ENCODE measurements at regions of chr14 and their contacts with region 1.

Region 1: DNA sequence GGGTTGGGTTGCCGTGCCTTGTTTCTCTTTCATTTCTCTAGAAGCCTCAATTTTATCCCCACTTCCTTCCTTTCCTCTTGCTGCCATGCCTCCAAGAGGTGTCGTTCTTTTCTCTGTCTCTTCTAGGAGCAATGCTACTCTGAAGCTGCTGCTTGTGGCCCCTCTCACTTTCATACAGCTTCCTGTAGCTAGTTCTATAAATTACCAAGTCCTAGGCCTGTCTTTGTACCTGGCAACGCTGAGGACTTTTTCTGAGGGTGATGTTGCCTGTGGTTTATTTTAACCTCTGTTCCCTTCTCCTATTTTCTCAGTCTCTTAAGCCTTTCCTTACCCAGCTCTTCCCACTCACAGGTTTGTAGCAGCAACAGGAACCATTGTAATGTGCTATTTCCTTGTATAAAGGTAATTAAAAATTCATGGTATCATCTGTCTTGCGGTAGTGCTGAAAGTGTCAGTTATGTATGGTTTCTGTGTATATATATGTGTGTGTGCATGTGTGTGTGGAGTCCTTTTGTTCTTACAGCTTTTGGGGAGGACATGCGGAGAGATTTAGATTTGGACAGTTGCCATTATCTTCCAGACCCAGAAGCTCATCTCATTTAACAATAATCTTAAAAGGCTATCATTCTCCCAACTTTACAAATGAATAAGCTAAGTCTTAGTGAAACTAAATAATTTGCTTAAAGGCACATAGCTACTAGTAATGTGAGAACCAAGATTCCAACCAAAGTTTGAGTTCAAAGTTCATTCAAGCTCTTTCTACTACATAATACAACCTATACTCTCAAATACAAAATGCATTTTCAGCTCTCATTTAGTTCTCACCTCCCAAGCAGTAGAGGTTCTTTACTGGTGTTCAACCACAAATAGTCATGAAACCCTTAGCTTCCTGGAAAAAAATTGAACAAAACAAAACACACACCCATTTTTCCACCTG is 43.8 kb downstream of the DDHD1 start:
- DNase-seq: peak; percentile 82
- ATAC-seq: peak; percentile 87
- H3K4me3 ChIP-seq: peak overlapping the region; percentile 63
- H3K27ac ChIP-seq: peak overlapping the region; percentile 98
- H3K4me1 ChIP-seq: peaks cover 22% of the 10 kb centered on the region
- H3K27me3 ChIP-seq: no peaks in the 10 kb centered on the region
- CTCF ChIP-seq: no peak
- EP300 ChIP-seq: peak; percentile 16 to 62; a peak in 1 of 4 replicates
- POLR2A ChIP-seq: no peak; the same call in 1 of the 2 replicates
- RAD21 ChIP-seq: peak; percentile 25; the same call in 1 of the 2 replicates

Region 2: DNA sequence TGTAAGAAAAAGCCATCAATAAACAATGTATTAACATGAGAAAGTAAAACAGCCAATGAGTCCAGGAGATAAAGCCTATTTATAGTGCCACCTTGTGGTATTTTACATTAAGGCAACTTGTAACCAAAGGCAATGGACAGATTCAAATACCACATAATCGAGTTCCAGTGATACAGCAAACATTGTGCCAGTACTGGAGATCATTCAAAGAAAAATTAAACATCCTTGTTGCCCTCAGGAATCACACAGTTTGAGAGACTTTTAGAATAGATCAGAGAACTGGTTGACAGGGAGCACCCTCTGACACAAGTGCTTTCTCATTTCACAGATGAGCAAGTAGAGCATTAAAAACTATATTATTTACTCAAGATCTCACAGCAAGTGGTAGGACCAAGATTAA is 54.4 kb before region 1 on chr14:
- CTCF ChIA-PET with region 1: interaction called, 14 read pairs
- POLR2A ChIA-PET with region 1: no interaction called
- RAD21 ChIA-PET with region 1: interaction called, 3 read pairs
- SMC1A ChIA-PET with region 1: interaction called, 4 read pairs
- in situ Hi-C with region 1: no loop called
- intact Hi-C with region 1: no loop called
- DNase-seq: peak; percentile 15
- ATAC-seq: peak; percentile 90
- H3K4me3 ChIP-seq: no peak overlapping the region
- H3K27ac ChIP-seq: no peak overlapping the region
- H3K4me1 ChIP-seq: no peaks in the 10 kb centered on the region
- H3K27me3 ChIP-seq: no peaks in the 10 kb centered on the region
- CTCF ChIP-seq: peak; percentile 53 to 69 (median 67); a peak in 5 of 6 replicates
- EP300 ChIP-seq: no peak
- POLR2A ChIP-seq: no peak
- RAD21 ChIP-seq: peak; percentile 66

Region 3: GRCh38 chr14:53126731-53127130 is 17.4 kb after region 1 on chr14:
- CTCF ChIA-PET with region 1: interaction called, 6 read pairs
- POLR2A ChIA-PET with region 1: interaction called, 8 read pairs
- RAD21 ChIA-PET with region 1: interaction called, 11 read pairs
- SMC1A ChIA-PET with region 1: interaction called, 17 read pairs
- in situ Hi-C with region 1: no loop called
- intact Hi-C with region 1: no loop called
- DNase-seq: no peak
- ATAC-seq: peak; percentile 45
- H3K4me3 ChIP-seq: peak overlapping the region; percentile 20
- H3K27ac ChIP-seq: peak overlapping the region; percentile 71
- H3K4me1 ChIP-seq: peaks cover 4% of the 10 kb centered on the region
- H3K27me3 ChIP-seq: no peaks in the 10 kb centered on the region
- CTCF ChIP-seq: no peak
- EP300 ChIP-seq: no peak
- POLR2A ChIP-seq: no peak
- RAD21 ChIP-seq: no peak

Region 4: DNA sequence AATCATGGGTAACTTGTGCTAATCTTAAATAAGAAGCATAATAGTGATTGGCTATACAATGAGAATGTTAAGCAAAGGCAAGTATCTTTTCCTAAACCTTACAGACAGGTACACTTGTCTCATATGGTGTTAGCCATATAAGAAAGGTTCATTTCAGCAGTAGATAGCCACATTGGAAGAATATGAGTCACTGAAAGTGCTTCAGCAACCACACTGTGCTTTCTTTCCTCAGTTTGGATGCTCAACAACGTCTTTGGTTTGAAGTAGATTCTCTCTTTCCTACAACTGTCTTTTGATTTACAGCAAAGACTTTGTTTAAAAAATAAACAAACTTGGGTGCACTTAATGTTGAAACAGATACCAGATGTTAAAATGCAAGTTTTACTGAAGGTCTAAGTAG is 34.9 kb after region 1 on chr14:
- CTCF ChIA-PET with region 1: interaction called, 60 read pairs
- POLR2A ChIA-PET with region 1: interaction called, 48 read pairs
- RAD21 ChIA-PET with region 1: interaction called, 98 read pairs
- SMC1A ChIA-PET with region 1: interaction called, 127 read pairs
- in situ Hi-C with region 1: no loop called
- intact Hi-C with region 1: loop called (anchors 2 kb)
- DNase-seq: peak; percentile 61
- ATAC-seq: peak; percentile 77
- H3K4me3 ChIP-seq: no peak overlapping the region; the same call in 1 of the 2 replicates
- H3K27ac ChIP-seq: peak overlapping the region; percentile 34; the same call in 1 of the 2 replicates
- H3K4me1 ChIP-seq: peaks cover 34% of the 10 kb centered on the region
- H3K27me3 ChIP-seq: no peaks in the 10 kb centered on the region
- CTCF ChIP-seq: no peak
- EP300 ChIP-seq: peak in 1 of 2 experiments; percentile 67; a peak in 1 of 4 replicates
- POLR2A ChIP-seq: no peak
- RAD21 ChIP-seq: no peak

Region 5: GRCh38 chr14:53161758-53162435 is 52.5 kb after region 1 on chr14:
- CTCF ChIA-PET with region 1: no interaction called
- POLR2A ChIA-PET with region 1: no interaction called
- RAD21 ChIA-PET with region 1: interaction called, 11 read pairs
- SMC1A ChIA-PET with region 1: interaction called, 4 read pairs
- in situ Hi-C with region 1: no loop called
- intact Hi-C with region 1: no loop called
- DNase-seq: no peak
- ATAC-seq: peak; percentile 57
- H3K4me3 ChIP-seq: no peak overlapping the region
- H3K27ac ChIP-seq: no peak overlapping the region
- H3K4me1 ChIP-seq: peaks cover 5% of the 10 kb centered on the region; the same call in 1 of the 2 replicates
- H3K27me3 ChIP-seq: no peaks in the 10 kb centered on the region
- CTCF ChIP-seq: no peak
- EP300 ChIP-seq: 0 out of 4 replicates have a peak, but pooled peaks of 1 of the 2 experiments have one; percentile 27
- POLR2A ChIP-seq: no peak
- RAD21 ChIP-seq: no peak

Measured in GM12878 (cell line).